GM18951 (cell line): ENCODE measurements at regions of chr7 and their contacts with region 1.

Region 1: DNA sequence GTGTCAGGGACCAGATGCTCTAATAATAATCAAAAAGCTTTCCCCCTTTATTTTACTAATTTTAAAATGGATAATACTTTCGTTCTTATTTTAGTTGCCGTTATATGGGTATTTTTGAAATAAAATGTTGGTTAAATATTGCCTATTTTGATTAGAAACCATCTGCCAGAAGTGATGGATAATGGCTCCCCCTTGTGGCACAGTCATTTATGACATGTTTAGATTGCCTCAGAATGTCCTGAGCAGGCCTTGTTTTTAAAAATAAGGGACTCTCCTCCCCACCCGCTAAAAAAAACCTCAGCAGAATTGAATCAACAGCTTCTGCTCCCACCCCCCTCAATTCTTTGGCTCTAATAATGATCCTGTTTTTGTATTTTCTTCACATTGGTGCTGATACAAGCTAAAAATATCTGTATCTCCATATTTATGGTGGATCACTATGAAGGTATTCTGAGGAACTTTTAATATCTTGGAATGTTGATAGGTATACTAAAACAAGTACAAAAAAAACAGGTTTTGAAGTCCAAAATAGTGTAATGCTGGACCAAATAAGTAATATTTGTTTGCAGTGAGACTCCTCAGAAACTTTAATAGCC is 38.8 kb downstream of the TMEM60 start:
- POLR2A ChIP-seq: no peak

Region 2: GRCh38 chr7:77649716-77650349 is 109.6 kb before region 1 on chr7:
- in situ Hi-C with region 1: loop called (anchors 10 kb)
- POLR2A ChIP-seq: no peak

Region 3: GRCh38 chr7:77855371-77856083 is 96.1 kb after region 1 on chr7:
- in situ Hi-C with region 1: no loop called
- POLR2A ChIP-seq: no peak

Region 4: GRCh38 chr7:78350926-78351325 is 591.5 kb after region 1 on chr7:
- in situ Hi-C with region 1: no loop called
- POLR2A ChIP-seq: no peak